Dendritic cell treated with granulocyte-macrophage colony-stimulating factor and Interleukin-4, amounts not matched to agents 40 ng/mL and 50 ng/mL, for 4 days (primary cell): ENCODE measurements at regions of chr11 and their contacts with region 1.

Region 1: DNA sequence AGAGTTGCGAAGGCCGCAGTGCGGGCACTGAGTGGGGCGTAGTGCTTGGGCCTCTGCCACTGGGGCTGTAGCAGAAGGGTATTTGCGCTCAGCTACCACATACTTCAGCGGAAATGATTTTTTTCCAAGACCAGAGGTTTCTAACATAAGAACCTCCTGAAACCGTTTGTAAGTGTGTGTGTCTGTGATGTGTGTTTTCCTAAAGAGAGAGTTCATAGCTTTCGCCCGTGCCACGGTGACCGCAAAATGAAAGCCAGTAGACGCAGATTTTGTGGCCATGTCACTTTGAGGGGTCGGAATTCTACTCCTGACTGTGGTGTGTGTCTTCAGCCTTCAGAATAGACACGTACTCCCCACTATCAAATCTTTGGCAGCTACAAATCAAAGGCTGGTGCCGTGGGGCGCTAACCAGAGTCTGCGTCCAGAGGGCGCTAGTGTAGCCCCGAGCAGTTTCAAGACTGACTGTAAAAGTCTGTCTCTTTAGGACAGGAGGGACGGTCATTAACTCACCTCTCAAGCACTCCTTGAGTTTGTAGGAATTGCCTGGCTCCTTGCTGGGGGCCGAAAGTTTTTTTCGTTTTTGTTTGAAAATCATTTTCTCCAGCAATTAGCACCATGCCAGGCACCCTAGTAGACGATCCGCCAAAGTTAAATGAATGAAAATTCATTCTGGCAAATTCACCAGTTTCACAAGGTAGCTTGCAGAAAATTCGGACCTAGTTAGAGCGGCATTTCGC is 2.5 kb upstream of the CALCA start:
- H3K4me3 Mint-ChIP-seq: no peak overlapping the region
- H3K27ac Mint-ChIP-seq: no peak overlapping the region
- H3K4me1 Mint-ChIP-seq: peaks cover 15% of the 10 kb centered on the region
- H3K27me3 Mint-ChIP-seq: peaks cover 76% of the 10 kb centered on the region

Region 2: GRCh38 chr11:15074206-15075161 is 99.8 kb after region 1 on chr11:
- intact Hi-C with region 1: loop called (anchors 10 kb)
- H3K4me3 Mint-ChIP-seq: no peak overlapping the region
- H3K27ac Mint-ChIP-seq: no peak overlapping the region
- H3K4me1 Mint-ChIP-seq: peaks cover 19% of the 10 kb centered on the region
- H3K27me3 Mint-ChIP-seq: peaks cover 34% of the 10 kb centered on the region